SK-N-SH (cell line): ENCODE measurements at regions of chr11 and their contacts with region 1.

Region 1: DNA sequence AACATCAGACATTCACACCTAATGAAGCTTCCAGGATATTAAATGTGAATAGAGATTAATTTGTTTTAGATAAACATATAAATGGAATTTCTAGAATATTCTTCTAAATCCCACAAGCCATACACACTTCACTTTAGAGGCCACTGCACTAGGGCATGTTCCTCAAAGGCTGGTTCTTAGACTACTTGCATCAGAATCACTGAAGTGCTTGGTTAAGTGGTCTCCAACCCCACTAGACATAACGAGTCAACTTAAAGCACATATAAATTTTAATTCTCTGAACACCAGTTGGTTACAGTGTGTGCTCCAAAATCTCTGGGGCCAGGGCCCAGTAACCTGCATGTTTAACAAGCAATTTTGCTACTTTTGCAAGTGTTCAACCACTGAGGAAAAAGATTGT is 7.9 kb upstream of the ALKBH8 start:
- DNase-seq: no peak
- H3K4me3 ChIP-seq: no peak overlapping the region
- H3K27ac ChIP-seq: no peak overlapping the region
- H3K4me1 ChIP-seq: peaks cover 0 to under 1% of the 10 kb centered on the region in 2 experiments; a peak in 1 of 4 replicates
- H3K27me3 ChIP-seq: no peaks in the 10 kb centered on the region
- CTCF ChIP-seq: no peak
- EP300 ChIP-seq: no peak
- RAD21 ChIP-seq: no peak

Region 2: GRCh38 chr11:107397357-107397756 is 176.1 kb before region 1 on chr11:
- CTCF ChIA-PET with region 1: no interaction called
- POLR2A ChIA-PET with region 1: no interaction called
- DNase-seq: no peak
- H3K4me3 ChIP-seq: no peak overlapping the region
- H3K27ac ChIP-seq: no peak overlapping the region
- H3K4me1 ChIP-seq: no peaks in the 10 kb centered on the region
- H3K27me3 ChIP-seq: no peaks in the 10 kb centered on the region
- CTCF ChIP-seq: no peak
- EP300 ChIP-seq: no peak
- RAD21 ChIP-seq: no peak

Region 3: GRCh38 chr11:107590460-107591377 is 17.3 kb after region 1 on chr11 and contains the start of gene ELMOD1:
- CTCF ChIA-PET with region 1: interaction called, 24 read pairs
- POLR2A ChIA-PET with region 1: no interaction called
- DNase-seq: peak; percentile 90
- H3K4me3 ChIP-seq: peak within 1 kb of the TSS; percentile 63 to 73
- H3K27ac ChIP-seq: no peak within 1 kb of the TSS
- H3K4me1 ChIP-seq: peaks cover 4 to 15% of the 10 kb centered on the region in 2 experiments; a peak in 1 of 4 replicates
- H3K27me3 ChIP-seq: peaks cover 40% of the 10 kb centered on the region
- CTCF ChIP-seq: 0 out of 2 replicates have a peak, but pooled peaks have one; percentile 17
- EP300 ChIP-seq: no peak
- RAD21 ChIP-seq: no peak
- polyA plus RNA-seq, gene ELMOD1: not detected in 2 replicates

Region 4: GRCh38 chr11:107598225-107599139 is 25.0 kb after region 1 on chr11:
- CTCF ChIA-PET with region 1: interaction called, 10 read pairs
- POLR2A ChIA-PET with region 1: no interaction called
- DNase-seq: peak; percentile 45
- H3K4me3 ChIP-seq: no peak overlapping the region
- H3K27ac ChIP-seq: no peak overlapping the region
- H3K4me1 ChIP-seq: no peaks in the 10 kb centered on the region
- H3K27me3 ChIP-seq: peaks cover 12% of the 10 kb centered on the region; the same call in 1 of the 2 replicates
- CTCF ChIP-seq: peak; percentile 54
- EP300 ChIP-seq: no peak
- RAD21 ChIP-seq: peak; percentile 33